ENCODE measurements at regions of chr11 and their contacts with region 1.

Region 1: DNA sequence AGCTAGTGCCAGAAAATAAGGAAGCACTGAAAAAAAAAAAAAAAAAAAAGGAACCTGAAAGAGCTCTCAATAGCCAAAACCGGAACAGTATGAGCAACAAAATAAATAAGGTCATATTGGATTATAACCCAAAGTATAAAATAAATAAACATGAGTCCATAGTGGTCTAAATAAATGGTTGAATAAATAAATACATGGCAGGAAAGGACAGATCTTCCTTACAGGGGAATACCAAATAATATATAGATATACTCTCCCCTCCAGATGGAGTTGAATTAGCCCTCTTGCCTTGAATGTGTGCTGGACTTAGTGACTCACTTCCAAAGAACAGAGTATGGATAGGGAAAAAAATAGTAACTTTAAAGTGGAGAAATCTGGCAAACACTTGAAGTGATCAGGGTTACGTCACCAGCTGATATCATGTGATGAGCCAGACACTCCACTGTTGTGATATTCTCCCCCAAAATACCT is 14.3 kb upstream of the ARRB1 start:
- DNase-seq: no peak
- H3K4me3 ChIP-seq: no peak overlapping the region
- H3K27ac ChIP-seq: no peak overlapping the region
- H3K4me1 ChIP-seq: no peaks in the 10 kb centered on the region
- H3K27me3 ChIP-seq: no peaks in the 10 kb centered on the region
- CTCF ChIP-seq: no peak

Region 2: GRCh38 chr11:75323609-75324008 is 42.1 kb before region 1 on chr11:
- CTCF ChIA-PET with region 1: no interaction called
- dilution Hi-C with region 1: loop called (anchors 5 kb)
- in situ Hi-C with region 1: no loop called
- intact Hi-C with region 1: no loop called
- DNase-seq: no peak
- H3K4me3 ChIP-seq: no peak overlapping the region
- H3K27ac ChIP-seq: no peak overlapping the region
- H3K4me1 ChIP-seq: peaks cover 36% of the 10 kb centered on the region
- H3K27me3 ChIP-seq: no peaks in the 10 kb centered on the region
- CTCF ChIP-seq: no peak

Region 3: DNA sequence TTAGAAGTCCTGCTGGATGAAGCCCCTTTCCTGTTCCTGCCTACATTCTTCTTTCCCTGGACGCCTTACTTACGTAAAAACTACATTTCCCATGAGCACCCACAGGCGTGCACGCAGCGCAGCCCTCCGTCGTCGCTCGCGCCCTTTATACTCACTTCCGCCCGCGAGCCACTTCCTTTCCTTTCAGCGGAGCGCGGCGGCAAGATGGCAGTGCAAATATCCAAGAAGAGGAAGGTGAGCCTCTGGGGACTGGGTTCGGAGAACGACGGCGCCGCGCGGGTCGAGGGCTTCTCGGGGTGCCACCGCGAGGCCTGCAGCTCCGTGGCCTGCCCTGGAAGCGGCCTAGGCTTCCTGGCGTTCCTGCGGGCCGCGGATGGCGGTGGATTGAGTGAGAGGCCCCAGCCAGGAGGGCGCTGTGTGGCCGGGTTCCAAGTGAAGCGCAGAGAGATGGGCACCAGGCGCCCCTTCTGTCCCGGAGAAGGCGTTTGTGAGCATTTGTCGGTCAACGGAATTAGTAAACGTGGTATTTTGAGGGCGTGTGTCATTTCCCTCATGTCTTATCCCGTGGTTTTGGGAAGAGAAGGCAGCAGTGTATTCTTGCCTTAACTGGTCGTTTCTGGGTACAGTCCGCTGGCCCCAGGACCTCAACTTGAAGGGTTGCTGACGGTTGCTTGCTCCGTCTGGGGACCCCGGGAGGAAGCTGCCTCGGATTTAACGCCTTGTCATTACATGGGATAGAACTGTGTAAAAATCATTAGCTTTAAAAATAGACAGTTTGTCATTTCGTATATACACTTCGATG is 33.8 kb after region 1 on chr11 and contains the start of gene RPS3:
- CTCF ChIA-PET with region 1: no interaction called
- dilution Hi-C with region 1: no loop called
- in situ Hi-C with region 1: no loop called
- intact Hi-C with region 1: no loop called
- DNase-seq: peak; percentile 89
- H3K4me3 ChIP-seq: peak within 1 kb of the TSS; percentile 84 to 90 (median 89)
- H3K27ac ChIP-seq: peak within 1 kb of the TSS; percentile 87
- H3K4me1 ChIP-seq: peaks cover 30% of the 10 kb centered on the region
- H3K27me3 ChIP-seq: no peaks in the 10 kb centered on the region
- CTCF ChIP-seq: peak in 1 of 2 donors; percentile 26
- total RNA-seq, gene RPS3: 1,423 to 2,367 TPM

Measured in mammary epithelial cell (primary cell).